Posterior vena cava (tissue), 2 donors: ENCODE measurements at regions of chr4 and their contacts with region 1.

Region 1: DNA sequence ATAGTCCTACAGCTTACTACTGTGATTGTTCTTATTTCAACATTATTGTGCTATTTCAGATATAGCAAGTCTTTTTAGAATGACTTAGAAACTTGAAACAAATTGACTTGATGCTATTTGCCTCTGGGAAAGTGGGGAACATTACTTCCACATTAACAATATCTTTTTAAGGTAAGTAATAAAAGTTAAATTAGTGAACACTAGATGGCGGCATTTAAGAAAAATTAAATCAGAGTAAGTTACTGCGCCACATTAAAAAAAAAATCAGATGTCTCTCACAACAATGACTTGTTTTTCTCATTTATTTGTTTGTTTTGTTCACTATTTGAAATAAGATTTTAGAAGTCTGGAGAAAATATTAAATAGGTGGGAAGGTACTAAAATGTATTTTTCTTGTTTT is 1026.9 kb upstream of the SLIT2 start:
- DNase-seq: no peak

Region 2: GRCh38 chr4:19748519-19749479 is 524.0 kb after region 1 on chr4:
- intact Hi-C with region 1: loop called in 1 of 2 experiments (anchors 5 kb)
- DNase-seq: no peak

Region 3: GRCh38 chr4:20512033-20512792 is 1287.4 kb after region 1 on chr4:
- intact Hi-C with region 1: no loop called
- DNase-seq: no peak